ENCODE measurements at regions of chr5 and their contacts with region 1.

Region 1: GRCh38 chr5:160054831-160055230 is 45.9 kb downstream of the TTC1 start:
- DNase-seq: no peak
- H3K4me3 ChIP-seq: no peak overlapping the region
- H3K27ac ChIP-seq: no peak overlapping the region
- H3K27me3 ChIP-seq: no peaks in the 10 kb centered on the region
- CTCF ChIP-seq: no peak

Region 2: DNA sequence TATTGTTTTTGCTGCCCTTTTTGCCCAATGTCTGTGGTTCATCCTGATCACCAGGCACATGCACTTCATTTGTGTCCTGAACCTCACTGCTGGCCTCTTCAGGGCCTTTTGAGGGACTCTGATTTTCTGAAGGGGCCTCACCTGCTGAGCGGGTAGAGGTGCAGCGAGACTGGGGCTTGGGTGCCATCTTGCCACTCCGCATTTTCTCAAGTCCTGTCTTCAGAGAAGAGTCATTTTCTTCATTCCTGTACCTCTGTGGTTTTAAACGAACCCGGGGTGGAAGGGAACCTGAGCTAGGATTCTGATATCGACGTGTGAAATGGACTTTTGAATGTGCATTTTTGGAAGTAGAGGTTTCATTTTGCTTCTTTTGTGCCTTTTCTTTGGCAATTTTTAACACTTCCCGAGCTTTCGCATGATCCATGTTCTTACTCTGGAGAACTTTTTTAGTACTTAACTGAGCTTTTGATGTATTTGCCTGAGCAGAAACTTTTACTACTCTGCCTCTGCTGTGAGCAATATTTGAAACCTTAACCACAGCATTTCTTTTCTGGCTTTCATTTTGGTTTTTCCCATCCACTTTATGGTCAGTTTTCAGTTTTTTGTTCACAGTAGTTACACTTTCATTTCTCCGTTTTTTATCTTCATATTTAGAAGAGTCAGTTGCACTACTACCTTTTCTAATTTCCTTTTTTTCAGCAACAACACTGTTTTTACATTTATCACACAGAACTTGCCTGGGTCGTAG is 38.3 kb after region 1 on chr5:
- CTCF ChIA-PET with region 1: no interaction called
- POLR2A ChIA-PET with region 1: interaction called, 15 read pairs
- DNase-seq: no peak
- H3K4me3 ChIP-seq: no peak overlapping the region
- H3K27ac ChIP-seq: no peak overlapping the region
- H3K27me3 ChIP-seq: no peaks in the 10 kb centered on the region
- CTCF ChIP-seq: no peak

Region 3: DNA sequence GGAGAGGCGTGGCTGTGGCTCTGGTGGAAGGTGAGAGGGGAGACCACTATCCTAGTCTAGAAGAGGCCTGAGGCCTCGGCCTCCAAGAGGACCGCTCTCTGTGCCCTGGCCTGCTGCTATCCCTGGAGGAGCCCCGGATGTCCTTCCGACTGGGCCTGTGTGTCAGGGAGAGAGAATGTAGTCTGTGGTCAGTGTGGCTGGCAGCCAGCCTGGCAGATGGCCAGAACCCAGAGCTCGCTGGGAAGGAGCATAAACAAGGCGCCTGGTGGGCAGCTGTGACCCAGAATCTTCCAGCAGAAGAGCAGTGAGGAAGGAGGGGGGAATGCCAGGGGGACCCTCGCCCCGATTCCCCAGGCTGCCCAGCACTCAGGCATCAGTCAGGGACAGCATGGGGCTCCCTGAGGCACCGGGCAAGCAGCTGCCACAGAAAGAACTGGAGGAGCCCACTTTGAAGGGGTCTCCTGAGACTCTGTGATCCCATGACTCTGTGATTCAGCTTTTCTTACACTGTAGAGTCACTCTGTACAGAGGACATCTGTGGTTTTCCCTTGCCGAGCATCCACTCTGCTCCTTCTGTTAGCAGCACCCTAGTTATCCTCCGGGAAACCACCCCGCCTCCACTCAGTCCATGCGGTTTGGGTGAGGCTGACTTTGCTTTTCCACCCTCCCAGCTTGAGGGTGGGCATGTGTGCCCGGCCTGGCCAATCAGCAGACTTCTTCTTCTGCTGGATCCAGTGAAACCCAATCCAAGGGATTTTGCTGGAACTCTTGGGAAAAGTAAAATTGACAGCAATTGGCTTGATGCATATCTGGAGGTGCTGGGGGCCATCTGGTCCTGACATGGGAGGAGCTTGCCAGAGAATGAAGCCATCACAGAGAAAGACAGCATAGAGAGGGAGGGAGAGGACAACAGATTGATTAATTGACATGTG is 110.6 kb after region 1 on chr5:
- CTCF ChIA-PET with region 1: no interaction called
- POLR2A ChIA-PET with region 1: no interaction called
- DNase-seq: peak; percentile 98
- H3K4me3 ChIP-seq: peak overlapping the region; percentile 48
- H3K27ac ChIP-seq: peak overlapping the region; percentile 99
- H3K27me3 ChIP-seq: no peaks in the 10 kb centered on the region
- CTCF ChIP-seq: no peak